Endothelial cell of umbilical vein (primary cell): ENCODE measurements at regions of chr5 and their contacts with region 1.

Region 1: DNA sequence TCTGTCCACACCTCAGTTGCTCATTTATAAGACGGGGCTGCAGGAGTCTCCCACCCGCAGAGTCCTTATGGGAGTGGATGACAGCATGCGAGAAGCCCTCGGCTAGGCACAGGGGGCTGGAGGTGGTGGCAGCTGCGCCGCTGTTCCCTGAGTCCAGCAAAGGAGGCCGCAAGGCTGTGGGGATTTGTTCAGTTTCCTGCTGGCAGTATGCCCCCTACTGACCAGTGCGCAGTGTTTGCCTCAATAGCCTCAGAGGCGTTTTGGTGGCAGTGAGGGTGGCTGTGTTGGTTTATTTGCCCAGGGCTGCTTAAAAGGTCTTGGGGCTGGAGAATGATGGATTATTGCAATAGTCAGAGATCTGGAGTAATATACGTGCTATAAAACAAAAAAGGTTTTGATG is 176.3 kb upstream of the OTULINL start:
- DNase-seq: no peak
- H3K4me3 ChIP-seq: no peak overlapping the region
- H3K27ac ChIP-seq: peak overlapping the region; percentile 9
- H3K4me1 ChIP-seq: peaks cover 41% of the 10 kb centered on the region
- H3K27me3 ChIP-seq: no peaks in the 10 kb centered on the region
- CTCF ChIP-seq: peak in 1 of 2 donors; percentile 32
- POLR2A ChIP-seq: no peak

Region 2: DNA sequence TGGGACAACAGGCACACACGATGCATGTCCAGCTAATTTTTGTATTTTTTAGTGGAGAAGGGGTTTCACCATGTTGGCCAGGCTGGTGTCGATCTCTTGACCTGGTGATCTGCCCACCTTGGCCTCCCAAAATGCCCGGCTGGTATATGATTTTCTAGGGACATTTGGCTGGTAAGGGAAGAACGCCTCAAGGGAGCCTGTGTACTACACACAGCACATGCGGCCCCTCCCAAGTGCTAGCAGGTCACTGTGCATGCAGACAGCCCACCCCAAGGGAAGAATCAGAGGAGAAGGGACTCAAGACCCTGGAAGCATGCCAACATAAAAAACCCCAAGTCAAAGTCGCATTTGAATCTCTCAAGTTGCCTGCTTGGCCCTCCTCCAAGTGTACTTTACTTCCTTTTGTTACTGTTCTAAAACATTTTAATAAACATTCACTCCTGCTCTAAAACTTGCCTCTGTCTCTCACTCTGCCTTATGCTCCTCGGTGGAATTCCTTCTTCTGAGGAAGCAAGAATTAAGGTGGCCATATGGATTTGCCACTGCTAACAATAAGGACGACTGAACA is 152.0 kb after region 1 on chr5:
- CTCF ChIA-PET with region 1: no interaction called
- POLR2A ChIA-PET with region 1: no interaction called
- dilution Hi-C with region 1: no loop called
- intact Hi-C with region 1: no loop called
- DNase-seq: no peak
- H3K4me3 ChIP-seq: no peak overlapping the region
- H3K27ac ChIP-seq: no peak overlapping the region
- H3K4me1 ChIP-seq: no peaks in the 10 kb centered on the region
- H3K27me3 ChIP-seq: peaks cover 0 to under 1% of the 10 kb centered on the region in 2 experiments
- CTCF ChIP-seq: no peak
- POLR2A ChIP-seq: no peak

Region 3: GRCh38 chr5:14650052-14650451 is 244.8 kb after region 1 on chr5:
- CTCF ChIA-PET with region 1: interaction called, 177 read pairs
- POLR2A ChIA-PET with region 1: no interaction called
- dilution Hi-C with region 1: no loop called
- intact Hi-C with region 1: no loop called
- DNase-seq: no peak
- H3K4me3 ChIP-seq: no peak overlapping the region
- H3K27ac ChIP-seq: no peak overlapping the region
- H3K4me1 ChIP-seq: no peaks in the 10 kb centered on the region
- H3K27me3 ChIP-seq: peaks cover 21 to 34% of the 10 kb centered on the region in 2 experiments
- CTCF ChIP-seq: no peak
- POLR2A ChIP-seq: no peak